ENCODE measurements at regions of chr11 and their contacts with region 1.

Region 1: GRCh38 chr11:128884703-128885338 is 6.3 kb upstream of the KCNJ5 start:
- DNase-seq: peak; percentile 90
- H3K4me3 Mint-ChIP-seq: no peak overlapping the region
- H3K27ac Mint-ChIP-seq: no peak overlapping the region
- H3K4me1 Mint-ChIP-seq: no peaks in the 10 kb centered on the region
- H3K27me3 Mint-ChIP-seq: peaks cover 61% of the 10 kb centered on the region

Region 2: GRCh38 chr11:128653801-128654231 is 231.0 kb before region 1 on chr11:
- intact Hi-C with region 1: no loop called
- DNase-seq: no peak
- H3K4me3 Mint-ChIP-seq: no peak overlapping the region
- H3K27ac Mint-ChIP-seq: no peak overlapping the region
- H3K4me1 Mint-ChIP-seq: peaks cover 7% of the 10 kb centered on the region
- H3K27me3 Mint-ChIP-seq: peaks cover 31% of the 10 kb centered on the region

Region 3: DNA sequence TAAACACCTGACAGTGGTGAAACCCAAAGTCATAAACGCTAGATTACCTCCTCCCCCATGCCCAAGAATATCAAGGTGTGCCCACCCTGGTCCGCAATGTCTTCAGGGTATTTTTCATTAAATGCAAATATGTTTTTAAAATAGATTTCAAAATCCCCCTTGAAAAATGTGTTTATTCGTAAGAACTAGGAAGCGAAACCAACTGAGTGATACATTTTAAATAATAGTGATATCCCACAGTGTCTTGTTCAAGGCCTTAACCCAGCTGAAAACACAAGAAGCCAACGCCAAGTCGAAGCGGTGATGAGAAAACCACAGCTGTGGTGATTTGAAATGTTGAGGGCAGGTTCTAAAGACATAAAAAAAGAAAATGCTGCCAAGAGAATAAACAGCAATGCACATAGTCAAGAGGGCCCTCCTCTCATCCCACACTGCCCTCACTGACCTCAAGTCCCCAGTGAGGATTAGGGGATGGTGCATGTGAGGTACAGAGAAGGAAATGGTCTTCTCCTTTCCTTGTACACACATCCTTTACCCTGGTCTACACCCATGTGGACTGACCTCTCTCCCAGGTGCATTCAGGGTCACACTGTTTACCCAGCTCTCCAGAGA is 43.3 kb before region 1 on chr11:
- intact Hi-C with region 1: no loop called
- DNase-seq: no peak
- H3K4me3 Mint-ChIP-seq: no peak overlapping the region
- H3K27ac Mint-ChIP-seq: no peak overlapping the region
- H3K4me1 Mint-ChIP-seq: peaks cover 35% of the 10 kb centered on the region
- H3K27me3 Mint-ChIP-seq: no peaks in the 10 kb centered on the region

Region 4: DNA sequence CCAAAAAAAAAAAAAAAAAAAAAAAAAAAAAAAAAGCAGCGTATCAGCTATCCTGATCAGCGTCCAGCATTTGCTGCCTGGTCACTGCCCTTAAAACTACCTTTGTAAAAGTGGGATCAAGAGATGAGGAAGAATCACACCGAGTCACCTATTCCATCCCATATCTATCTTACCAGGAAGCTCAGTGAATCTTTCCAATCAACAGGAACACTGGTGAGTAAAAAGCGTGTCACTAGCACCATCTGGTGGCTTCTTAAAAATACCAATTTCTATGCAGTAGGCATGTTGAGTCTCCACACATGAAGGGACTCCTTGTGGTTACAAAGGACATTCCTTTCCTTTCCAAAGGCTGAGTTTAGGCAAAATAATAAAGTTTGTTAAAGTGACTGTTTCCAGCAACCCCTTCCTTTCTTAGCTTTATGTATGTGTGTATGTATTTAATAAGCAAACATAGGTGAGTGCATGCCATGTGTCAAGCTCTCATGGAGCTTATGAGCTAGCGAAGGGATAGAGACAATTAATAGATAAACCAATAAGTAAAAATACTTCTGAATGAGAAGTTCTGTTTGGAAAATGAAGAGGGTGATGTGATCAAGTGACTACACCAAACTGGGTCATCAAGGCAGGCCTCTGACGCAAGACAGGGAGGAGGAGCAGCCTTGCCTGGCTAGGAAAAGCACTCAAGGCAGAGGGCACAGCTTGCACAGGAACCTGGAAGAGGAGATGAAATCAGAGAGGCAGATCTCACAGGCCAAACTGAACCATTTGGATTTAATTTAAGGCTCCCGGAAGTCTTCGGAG is 71.8 kb after region 1 on chr11:
- intact Hi-C with region 1: loop called (anchors 1 kb)
- DNase-seq: peak; percentile 75
- H3K4me3 Mint-ChIP-seq: no peak overlapping the region
- H3K27ac Mint-ChIP-seq: no peak overlapping the region
- H3K4me1 Mint-ChIP-seq: peaks cover 2% of the 10 kb centered on the region
- H3K27me3 Mint-ChIP-seq: peaks cover 18% of the 10 kb centered on the region

Region 5: GRCh38 chr11:129331871-129332274 is 447.1 kb after region 1 on chr11:
- intact Hi-C with region 1: loop called (anchors 1 kb)
- DNase-seq: peak; percentile 89
- H3K4me3 Mint-ChIP-seq: no peak overlapping the region
- H3K27ac Mint-ChIP-seq: no peak overlapping the region
- H3K4me1 Mint-ChIP-seq: peaks cover 2% of the 10 kb centered on the region
- H3K27me3 Mint-ChIP-seq: peaks cover 3% of the 10 kb centered on the region